GM12878 (cell line): ENCODE measurements at regions of chr5 and their contacts with region 1.

Region 1: GRCh38 chr5:36708996-36709395 is 102.6 kb downstream of the SLC1A3 start:
- DNase-seq: no peak
- ATAC-seq: no peak
- H3K4me3 ChIP-seq: no peak overlapping the region
- H3K27ac ChIP-seq: no peak overlapping the region
- H3K4me1 ChIP-seq: no peaks in the 10 kb centered on the region
- H3K27me3 ChIP-seq: no peaks in the 10 kb centered on the region
- CTCF ChIP-seq: no peak
- EP300 ChIP-seq: no peak
- POLR2A ChIP-seq: no peak
- RAD21 ChIP-seq: no peak

Region 2: GRCh38 chr5:36552626-36553393 is 156.2 kb before region 1 on chr5:
- CTCF ChIA-PET with region 1: no interaction called
- POLR2A ChIA-PET with region 1: no interaction called
- RAD21 ChIA-PET with region 1: no interaction called
- SMC1A ChIA-PET with region 1: no interaction called
- in situ Hi-C with region 1: no loop called
- intact Hi-C with region 1: no loop called
- DNase-seq: no peak
- ATAC-seq: no peak
- H3K4me3 ChIP-seq: no peak overlapping the region
- H3K27ac ChIP-seq: no peak overlapping the region
- H3K4me1 ChIP-seq: no peaks in the 10 kb centered on the region
- H3K27me3 ChIP-seq: no peaks in the 10 kb centered on the region
- CTCF ChIP-seq: no peak
- EP300 ChIP-seq: no peak
- POLR2A ChIP-seq: no peak
- RAD21 ChIP-seq: no peak

Region 3: GRCh38 chr5:36606428-36607113 is 102.4 kb before region 1 on chr5 and contains the start of gene SLC1A3:
- CTCF ChIA-PET with region 1: no interaction called
- POLR2A ChIA-PET with region 1: no interaction called
- RAD21 ChIA-PET with region 1: no interaction called
- SMC1A ChIA-PET with region 1: no interaction called
- in situ Hi-C with region 1: no loop called
- intact Hi-C with region 1: no loop called
- DNase-seq: peak; percentile 28
- ATAC-seq: peak; percentile 92
- H3K4me3 ChIP-seq: peak within 1 kb of the TSS; percentile 73
- H3K27ac ChIP-seq: no peak within 1 kb of the TSS
- H3K4me1 ChIP-seq: no peaks in the 10 kb centered on the region
- H3K27me3 ChIP-seq: no peaks in the 10 kb centered on the region
- CTCF ChIP-seq: no peak
- EP300 ChIP-seq: no peak
- POLR2A ChIP-seq: peak; percentile 45; the same call in 1 of the 2 replicates
- RAD21 ChIP-seq: no peak
- polyA plus RNA-seq, gene SLC1A3: 3.5 to 4.0 TPM

Region 4: GRCh38 chr5:36695677-36696673 is 13.0 kb before region 1 on chr5:
- CTCF ChIA-PET with region 1: interaction called, 23 read pairs
- POLR2A ChIA-PET with region 1: interaction called, 3 read pairs
- RAD21 ChIA-PET with region 1: interaction called, 10 read pairs
- SMC1A ChIA-PET with region 1: interaction called, 18 read pairs
- in situ Hi-C with region 1: no loop called
- intact Hi-C with region 1: no loop called
- DNase-seq: no peak
- ATAC-seq: peak; percentile 76
- H3K4me3 ChIP-seq: no peak overlapping the region
- H3K27ac ChIP-seq: no peak overlapping the region
- H3K4me1 ChIP-seq: peaks cover 13% of the 10 kb centered on the region
- H3K27me3 ChIP-seq: no peaks in the 10 kb centered on the region
- CTCF ChIP-seq: peak; percentile 72 to 82 (median 77)
- EP300 ChIP-seq: no peak
- POLR2A ChIP-seq: no peak
- RAD21 ChIP-seq: peak; percentile 52; the same call in 1 of the 2 replicates

Region 5: GRCh38 chr5:36722900-36723299 is 13.9 kb after region 1 on chr5:
- CTCF ChIA-PET with region 1: interaction called, 13 read pairs
- POLR2A ChIA-PET with region 1: interaction called, 6 read pairs
- RAD21 ChIA-PET with region 1: interaction called, 6 read pairs
- SMC1A ChIA-PET with region 1: interaction called, 17 read pairs
- in situ Hi-C with region 1: no loop called
- intact Hi-C with region 1: no loop called
- DNase-seq: peak; percentile 86
- ATAC-seq: peak; percentile 59
- H3K4me3 ChIP-seq: peak overlapping the region; percentile 60
- H3K27ac ChIP-seq: peak overlapping the region; percentile 96
- H3K4me1 ChIP-seq: peaks cover 54% of the 10 kb centered on the region
- H3K27me3 ChIP-seq: no peaks in the 10 kb centered on the region
- CTCF ChIP-seq: no peak
- EP300 ChIP-seq: no peak
- POLR2A ChIP-seq: no peak
- RAD21 ChIP-seq: no peak

Region 6: DNA sequence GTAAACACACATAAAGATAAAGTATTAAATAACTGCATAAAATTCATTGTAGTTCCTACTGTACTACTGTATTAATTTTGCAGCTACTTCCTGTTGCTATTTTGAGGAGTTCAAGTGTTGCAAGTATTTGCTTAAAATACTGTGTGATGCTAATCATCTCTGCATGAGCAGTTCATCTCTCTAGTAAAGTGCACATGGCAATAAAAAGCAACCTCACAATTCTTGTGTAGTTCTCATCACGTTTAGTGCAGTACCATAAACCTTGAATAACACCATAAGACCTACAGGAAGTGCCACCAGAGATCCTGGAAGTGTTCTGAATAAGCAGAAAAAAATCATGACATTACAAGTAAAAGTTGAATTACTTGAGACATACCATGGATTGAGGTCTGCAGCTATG is 505.6 kb after region 1 on chr5:
- CTCF ChIA-PET with region 1: no interaction called
- POLR2A ChIA-PET with region 1: no interaction called
- RAD21 ChIA-PET with region 1: no interaction called
- SMC1A ChIA-PET with region 1: no interaction called
- in situ Hi-C with region 1: no loop called
- intact Hi-C with region 1: no loop called
- DNase-seq: no peak
- ATAC-seq: peak; percentile 68
- H3K4me3 ChIP-seq: no peak overlapping the region
- H3K27ac ChIP-seq: 0 out of 2 replicates have a peak overlapping the region, but pooled peaks have one; percentile 25
- H3K4me1 ChIP-seq: peaks cover 10% of the 10 kb centered on the region
- H3K27me3 ChIP-seq: no peaks in the 10 kb centered on the region
- CTCF ChIP-seq: no peak
- EP300 ChIP-seq: no peak
- POLR2A ChIP-seq: no peak
- RAD21 ChIP-seq: no peak